ENCODE measurements at regions of chrX and their contacts with region 1.

Region 1: DNA sequence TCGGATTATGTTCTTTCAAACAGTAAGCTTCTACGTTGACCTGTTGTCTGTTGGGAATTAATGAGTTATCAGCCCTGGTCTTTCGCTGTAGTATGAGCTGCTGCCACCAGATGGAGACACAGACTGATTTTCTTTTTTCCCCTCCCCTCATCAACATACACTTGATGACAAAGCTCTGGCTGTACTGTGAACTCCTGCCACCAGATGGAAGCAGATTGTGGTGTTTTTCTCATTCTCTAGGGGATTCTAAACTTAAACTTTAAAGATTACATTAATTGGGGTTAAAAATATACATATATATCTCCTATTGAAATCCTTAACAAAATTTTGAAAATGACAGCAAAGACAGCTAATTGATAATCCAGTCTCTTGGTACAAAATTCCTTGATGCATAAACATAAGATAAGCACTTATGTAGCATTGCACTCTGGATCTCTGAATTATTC is 44.8 kb downstream of the SMS start:
- DNase-seq: peak; percentile 40
- ATAC-seq: peak; percentile 93
- H3K4me3 Mint-ChIP-seq: no peak overlapping the region
- H3K27ac Mint-ChIP-seq: no peak overlapping the region
- H3K4me1 Mint-ChIP-seq: peaks cover 16% of the 10 kb centered on the region
- H3K27me3 Mint-ChIP-seq: no peaks in the 10 kb centered on the region
- CTCF ChIP-seq: peak; percentile 44

Region 2: DNA sequence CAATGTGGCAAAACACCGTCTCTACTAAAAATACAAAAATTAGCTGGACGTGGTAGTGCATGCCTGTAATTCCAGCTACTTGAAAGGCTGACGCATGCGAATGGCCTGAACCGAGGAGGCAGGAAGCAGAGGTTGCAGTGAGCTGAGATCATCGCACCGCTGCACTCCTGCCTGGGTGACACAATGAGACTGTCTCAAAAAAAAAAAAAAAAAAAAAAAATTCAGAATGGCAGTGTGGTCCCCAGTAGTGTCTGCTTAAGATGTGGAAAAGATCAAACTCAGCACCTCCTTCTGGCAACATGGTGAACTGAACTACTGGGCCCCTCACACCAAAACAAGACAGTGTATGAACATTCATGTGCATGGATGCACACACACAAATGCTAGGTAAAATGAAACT is 12.6 kb before region 1 on chrX:
- CTCF ChIA-PET with region 1: interaction called, 18 read pairs
- POLR2A ChIA-PET with region 1: no interaction called
- intact Hi-C with region 1: no loop called
- DNase-seq: no peak
- ATAC-seq: peak; percentile 56
- H3K4me3 Mint-ChIP-seq: no peak overlapping the region
- H3K27ac Mint-ChIP-seq: peak overlapping the region; percentile 72
- H3K4me1 Mint-ChIP-seq: peaks cover 27% of the 10 kb centered on the region
- H3K27me3 Mint-ChIP-seq: no peaks in the 10 kb centered on the region
- CTCF ChIP-seq: no peak

Region 3: DNA sequence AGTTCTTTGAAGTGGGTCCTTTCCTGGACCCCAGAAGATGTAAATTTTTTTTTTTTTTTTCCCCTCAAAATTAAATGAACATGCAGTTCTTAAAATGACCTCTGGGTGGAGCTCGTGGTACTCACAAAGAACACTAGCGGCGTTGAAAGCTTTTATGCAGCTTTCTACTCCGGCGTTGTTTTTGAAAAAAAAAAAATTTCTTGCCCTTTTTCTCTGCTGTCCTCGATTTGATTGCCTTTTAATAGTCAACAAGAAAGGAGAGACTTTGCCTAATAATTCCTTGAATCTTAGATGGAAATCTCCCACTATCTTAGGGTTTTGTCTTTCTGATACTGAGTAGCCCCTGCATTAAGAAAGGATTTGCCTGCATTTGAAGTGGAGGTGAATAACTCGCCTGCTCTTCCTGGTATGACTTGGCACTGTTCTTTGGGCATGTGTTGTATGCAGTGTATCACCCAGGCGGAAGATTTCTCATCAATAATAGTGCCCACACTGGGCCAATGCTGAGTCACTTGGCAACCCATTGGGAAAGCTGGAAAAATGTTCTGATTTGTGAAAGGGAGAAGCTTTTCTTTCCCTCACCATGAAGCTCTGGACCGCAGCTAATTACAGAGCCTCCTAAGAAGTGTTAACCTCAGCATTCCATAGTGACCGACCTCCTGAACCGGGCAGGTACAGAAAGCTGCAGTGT is 150.8 kb after region 1 on chrX:
- CTCF ChIA-PET with region 1: interaction called, 24 read pairs
- POLR2A ChIA-PET with region 1: no interaction called
- intact Hi-C with region 1: loop called (anchors 1 kb)
- DNase-seq: no peak
- ATAC-seq: no peak
- H3K4me3 Mint-ChIP-seq: no peak overlapping the region
- H3K27ac Mint-ChIP-seq: no peak overlapping the region
- H3K4me1 Mint-ChIP-seq: peaks cover 4% of the 10 kb centered on the region
- H3K27me3 Mint-ChIP-seq: no peaks in the 10 kb centered on the region
- CTCF ChIP-seq: no peak

Region 4: DNA sequence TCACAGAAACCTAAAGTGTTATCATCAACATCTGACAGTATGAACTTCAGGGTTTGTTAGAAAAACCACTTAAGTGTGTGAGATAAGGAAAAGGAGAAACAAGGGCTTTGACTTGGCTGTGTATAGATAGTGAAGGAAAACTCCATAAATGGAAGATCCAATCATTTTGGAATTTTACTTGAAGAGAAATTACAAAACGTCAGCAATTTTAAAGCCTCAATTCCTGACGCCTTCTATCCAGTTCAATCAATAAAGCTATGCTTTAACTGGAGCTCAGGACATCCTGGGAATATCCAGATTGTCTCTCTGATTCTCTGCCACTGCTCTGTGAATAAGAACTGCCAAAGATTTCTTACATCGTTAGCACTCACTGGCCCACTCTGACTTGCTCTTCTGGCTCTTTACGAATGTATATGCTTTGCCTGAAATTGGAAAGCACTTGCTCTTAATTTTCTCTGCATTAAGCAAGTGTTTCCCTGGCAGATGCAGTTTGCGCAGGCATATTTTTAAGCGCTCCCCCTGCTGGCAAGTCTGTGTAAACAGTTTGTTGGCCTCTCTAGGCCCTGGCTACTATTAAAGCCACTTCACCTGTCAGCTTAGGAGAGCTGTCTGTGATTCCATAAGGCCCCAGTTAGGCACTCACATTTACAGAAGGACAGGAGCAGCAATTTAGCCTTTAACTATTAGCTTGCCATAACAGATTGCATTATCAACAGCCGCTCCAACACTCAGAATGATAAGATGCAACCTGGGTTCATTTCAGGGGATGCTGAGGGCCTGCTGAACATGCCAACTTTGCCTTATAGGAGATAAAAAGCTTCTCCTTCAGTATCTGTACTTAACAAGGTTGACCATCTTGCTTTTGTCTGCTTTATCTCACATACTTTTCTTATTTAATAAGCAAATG is 763.0 kb after region 1 on chrX:
- CTCF ChIA-PET with region 1: interaction called, 36 read pairs
- POLR2A ChIA-PET with region 1: no interaction called
- intact Hi-C with region 1: loop called (anchors 1 kb)
- DNase-seq: peak; percentile 14
- ATAC-seq: peak; percentile 64
- H3K4me3 Mint-ChIP-seq: no peak overlapping the region
- H3K27ac Mint-ChIP-seq: no peak overlapping the region
- H3K4me1 Mint-ChIP-seq: no peaks in the 10 kb centered on the region
- H3K27me3 Mint-ChIP-seq: no peaks in the 10 kb centered on the region
- CTCF ChIP-seq: no peak

Region 5: DNA sequence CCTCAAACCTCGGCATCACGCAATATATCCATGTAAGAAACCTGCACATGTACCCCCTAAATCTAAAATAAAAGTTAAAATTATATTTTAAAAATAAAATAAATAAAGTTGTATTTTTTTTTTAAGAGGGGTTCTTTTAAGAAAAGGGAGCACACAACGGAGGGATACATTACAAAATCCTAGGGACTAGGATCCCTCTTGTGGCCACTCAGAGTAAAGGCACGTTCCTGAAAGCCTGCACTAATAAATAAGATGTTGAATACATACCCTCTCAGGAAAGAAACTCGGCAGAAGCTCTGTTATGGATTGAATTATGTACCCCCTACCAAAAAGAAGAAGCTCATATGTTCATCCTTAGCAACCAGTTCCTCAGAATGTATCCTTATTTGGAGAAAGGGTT is 1631.0 kb after region 1 on chrX:
- CTCF ChIA-PET with region 1: no interaction called
- POLR2A ChIA-PET with region 1: no interaction called
- intact Hi-C with region 1: loop called (anchors 1 kb)
- DNase-seq: no peak
- ATAC-seq: no peak
- H3K4me3 Mint-ChIP-seq: no peak overlapping the region
- H3K27ac Mint-ChIP-seq: no peak overlapping the region
- H3K4me1 Mint-ChIP-seq: no peaks in the 10 kb centered on the region
- H3K27me3 Mint-ChIP-seq: no peaks in the 10 kb centered on the region
- CTCF ChIP-seq: no peak